ENCODE measurements at regions of chr6 and their contacts with region 1.

Region 1: GRCh38 chr6:41424370-41425058 is 89.1 kb downstream of the NCR2 start:
- DNase-seq: peak in 1 of 2 experiments; percentile 97
- H3K4me3 ChIP-seq: no peak overlapping the region
- H3K27ac ChIP-seq: no peak overlapping the region
- H3K4me1 ChIP-seq: peaks cover 3 to 29% (median 8%) of the 10 kb centered on the region in 4 experiments
- H3K27me3 ChIP-seq: peaks cover 24 to 62% (median 54%) of the 10 kb centered on the region in 4 experiments
- CTCF ChIP-seq: peak; percentile 34 to 88 (median 85)
- EP300 ChIP-seq: no peak
- POLR2A ChIP-seq: no peak
- RAD21 ChIP-seq: peak; percentile 72 to 82

Region 2: DNA sequence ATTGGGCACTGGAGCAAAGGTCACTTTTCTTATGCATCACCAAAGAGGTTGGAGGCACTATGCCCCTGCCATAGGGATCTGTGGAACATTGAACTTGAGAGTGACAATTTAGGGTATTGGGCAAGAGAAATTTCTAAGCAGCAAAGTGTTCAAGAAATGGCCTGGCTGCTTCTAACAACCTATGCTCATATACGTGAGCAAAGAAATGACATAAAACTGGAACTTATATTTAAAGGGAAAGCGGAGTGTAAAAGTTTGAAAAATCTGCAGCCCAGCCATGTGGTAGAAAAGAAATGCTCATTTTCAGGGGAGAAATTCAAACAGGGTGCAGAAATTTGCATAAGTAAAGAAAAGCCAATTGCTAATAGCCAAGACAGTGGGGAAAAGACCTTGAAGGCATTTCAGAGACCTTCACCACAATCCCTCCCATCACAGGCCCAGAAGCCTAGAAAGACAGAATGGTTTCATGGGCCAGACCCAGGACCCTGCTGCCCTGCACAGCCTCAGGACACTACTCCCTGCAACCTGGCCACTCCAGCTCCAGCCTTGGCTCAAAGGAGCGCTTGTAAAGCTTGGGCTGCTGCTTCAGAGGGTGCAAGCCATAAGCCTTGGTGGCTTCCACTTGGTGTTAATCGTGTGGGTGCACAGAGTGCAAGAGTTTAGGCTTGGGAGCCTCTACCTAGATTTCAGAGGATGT is 64.7 kb before region 1 on chr6:
- CTCF ChIA-PET with region 1: no interaction called
- POLR2A ChIA-PET with region 1: no interaction called
- DNase-seq: peak in 1 of 2 experiments; percentile 13
- H3K4me3 ChIP-seq: no peak overlapping the region
- H3K27ac ChIP-seq: no peak overlapping the region
- H3K4me1 ChIP-seq: no peaks in the 10 kb centered on the region
- H3K27me3 ChIP-seq: no peaks in the 10 kb centered on the region; a peak in 1 of 7 replicates
- CTCF ChIP-seq: no peak
- EP300 ChIP-seq: no peak
- POLR2A ChIP-seq: no peak
- RAD21 ChIP-seq: no peak

Region 3: DNA sequence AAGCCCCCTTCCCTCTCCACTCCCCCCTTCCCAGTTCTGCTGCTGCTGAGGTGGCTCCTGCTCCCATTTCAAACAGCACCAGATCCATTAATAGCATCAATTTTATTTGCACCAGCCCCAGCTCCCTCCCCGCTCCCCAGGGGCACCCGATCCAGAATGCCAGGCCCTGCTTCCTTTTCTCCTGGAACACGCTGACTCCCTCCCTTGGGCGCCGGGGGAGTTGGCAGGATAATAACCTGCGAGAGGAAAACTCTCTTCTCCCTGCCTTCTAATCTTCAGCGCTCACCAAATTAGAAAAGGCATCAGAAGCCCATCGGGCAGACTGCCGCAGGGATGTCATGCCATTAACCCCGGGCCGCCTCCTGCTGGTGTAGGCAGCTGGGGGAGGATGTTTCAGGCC is 11.3 kb before region 1 on chr6:
- CTCF ChIA-PET with region 1: interaction called, 28 read pairs
- POLR2A ChIA-PET with region 1: interaction called, 5 read pairs
- DNase-seq: no peak
- H3K4me3 ChIP-seq: peak overlapping the region in 1 of 4 experiments; percentile 32; a peak in 2 of 8 replicates
- H3K27ac ChIP-seq: no peak overlapping the region
- H3K4me1 ChIP-seq: peaks cover 4 to 25% (median 12%) of the 10 kb centered on the region in 4 experiments
- H3K27me3 ChIP-seq: peaks cover 89 to 100% (median 99%) of the 10 kb centered on the region in 4 experiments
- CTCF ChIP-seq: no peak
- EP300 ChIP-seq: no peak
- POLR2A ChIP-seq: no peak
- RAD21 ChIP-seq: no peak

Region 4: GRCh38 chr6:41483943-41484342 is 59.4 kb after region 1 on chr6:
- CTCF ChIA-PET with region 1: interaction called, 10 read pairs
- POLR2A ChIA-PET with region 1: no interaction called
- DNase-seq: no peak
- H3K4me3 ChIP-seq: no peak overlapping the region
- H3K27ac ChIP-seq: no peak overlapping the region
- H3K4me1 ChIP-seq: peaks cover 7 to 13% (median 9%) of the 10 kb centered on the region in 4 experiments
- H3K27me3 ChIP-seq: peaks cover 0 to 3% (median 2%) of the 10 kb centered on the region in 4 experiments; a peak in 4 of 7 replicates
- CTCF ChIP-seq: no peak
- EP300 ChIP-seq: no peak
- POLR2A ChIP-seq: no peak
- RAD21 ChIP-seq: no peak

Region 5: GRCh38 chr6:41551086-41551700 is 126.7 kb after region 1 on chr6:
- CTCF ChIA-PET with region 1: interaction called, 25 read pairs
- POLR2A ChIA-PET with region 1: interaction called, 4 read pairs
- DNase-seq: no peak
- H3K4me3 ChIP-seq: no peak overlapping the region
- H3K27ac ChIP-seq: no peak overlapping the region
- H3K4me1 ChIP-seq: peaks cover 41 to 70% (median 50%) of the 10 kb centered on the region in 4 experiments
- H3K27me3 ChIP-seq: peaks cover 20 to 78% (median 73%) of the 10 kb centered on the region in 4 experiments
- CTCF ChIP-seq: no peak
- EP300 ChIP-seq: no peak
- POLR2A ChIP-seq: no peak
- RAD21 ChIP-seq: no peak

Region 6: DNA sequence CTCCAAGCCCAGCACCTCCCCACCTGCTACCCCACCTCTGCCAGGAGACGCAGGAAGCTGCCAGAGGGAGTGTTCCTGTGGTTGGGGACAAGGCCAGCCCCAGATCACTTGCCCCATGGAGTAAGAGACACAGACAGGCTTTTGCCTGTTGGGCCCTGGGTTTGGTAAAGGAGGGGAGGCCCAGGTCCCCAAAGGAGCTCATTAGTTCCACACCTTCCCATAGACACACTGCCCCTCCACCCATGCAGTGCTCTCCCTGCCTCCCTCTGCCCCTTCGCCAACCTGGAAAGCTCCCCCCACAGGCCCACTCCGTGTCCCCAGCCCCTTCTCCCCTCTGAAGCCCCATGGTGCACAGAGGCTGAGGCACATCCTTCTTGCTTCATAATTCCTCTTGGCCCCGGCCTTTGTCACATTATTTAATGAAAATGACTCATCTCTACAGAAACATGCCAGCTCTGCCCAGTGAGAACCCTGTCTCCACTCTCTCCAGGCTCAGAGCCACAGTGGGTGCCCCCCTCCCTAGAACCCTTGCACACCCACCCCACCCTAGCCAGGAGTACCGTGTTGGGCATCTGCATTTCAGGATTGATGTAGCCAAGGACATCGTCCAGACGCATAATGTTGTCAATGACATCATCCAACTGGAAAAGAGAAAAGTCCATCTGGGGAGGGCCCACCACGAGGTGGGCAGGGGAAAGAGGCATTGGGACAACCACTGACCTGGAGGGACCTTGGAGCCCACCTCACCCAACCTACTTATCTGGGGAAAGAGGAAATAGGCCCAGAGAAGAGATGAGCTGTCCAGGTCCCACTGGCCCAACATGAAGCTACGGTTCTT is 264.9 kb after region 1 on chr6:
- CTCF ChIA-PET with region 1: interaction called, 30 read pairs
- POLR2A ChIA-PET with region 1: no interaction called
- DNase-seq: no peak
- H3K4me3 ChIP-seq: no peak overlapping the region
- H3K27ac ChIP-seq: no peak overlapping the region
- H3K4me1 ChIP-seq: peaks cover 5 to 16% (median 6%) of the 10 kb centered on the region in 4 experiments; a peak in 6 of 7 replicates
- H3K27me3 ChIP-seq: no peaks in the 10 kb centered on the region; a peak in 1 of 7 replicates
- CTCF ChIP-seq: no peak
- EP300 ChIP-seq: no peak
- POLR2A ChIP-seq: no peak
- RAD21 ChIP-seq: no peak